Activated T-helper 1 cell treated with anti-CD3 and anti-CD28 coated beads, Interleukin-12 subunit alpha, Interleukin-12 subunit beta, Interleukin-2, Interleukin-4 antibody, amounts not matched to agents 30 ng/mL and 10 ng/mL and 1 ng/mL, durations not matched to agents 14 hours and 24 hours and 36 hours (primary cell): ENCODE measurements at regions of chr2 and their contacts with region 1.

Region 1: GRCh38 chr2:9753276-9753600 is 90.0 kb upstream of the TAF1B start:
- DNase-seq: peak; percentile 45
- H3K4me3 Mint-ChIP-seq: peak overlapping the region; percentile 77
- H3K27ac Mint-ChIP-seq: peak overlapping the region; percentile 96
- H3K4me1 Mint-ChIP-seq: peaks cover 70% of the 10 kb centered on the region
- H3K27me3 Mint-ChIP-seq: peaks cover 34% of the 10 kb centered on the region

Region 2: GRCh38 chr2:9594366-9595054 is 158.7 kb before region 1 on chr2:
- intact Hi-C with region 1: loop called (anchors 1 kb)
- DNase-seq: no peak
- H3K4me3 Mint-ChIP-seq: peak overlapping the region; percentile 28
- H3K27ac Mint-ChIP-seq: peak overlapping the region; percentile 85
- H3K4me1 Mint-ChIP-seq: peaks cover 71% of the 10 kb centered on the region
- H3K27me3 Mint-ChIP-seq: no peaks in the 10 kb centered on the region

Region 3: DNA sequence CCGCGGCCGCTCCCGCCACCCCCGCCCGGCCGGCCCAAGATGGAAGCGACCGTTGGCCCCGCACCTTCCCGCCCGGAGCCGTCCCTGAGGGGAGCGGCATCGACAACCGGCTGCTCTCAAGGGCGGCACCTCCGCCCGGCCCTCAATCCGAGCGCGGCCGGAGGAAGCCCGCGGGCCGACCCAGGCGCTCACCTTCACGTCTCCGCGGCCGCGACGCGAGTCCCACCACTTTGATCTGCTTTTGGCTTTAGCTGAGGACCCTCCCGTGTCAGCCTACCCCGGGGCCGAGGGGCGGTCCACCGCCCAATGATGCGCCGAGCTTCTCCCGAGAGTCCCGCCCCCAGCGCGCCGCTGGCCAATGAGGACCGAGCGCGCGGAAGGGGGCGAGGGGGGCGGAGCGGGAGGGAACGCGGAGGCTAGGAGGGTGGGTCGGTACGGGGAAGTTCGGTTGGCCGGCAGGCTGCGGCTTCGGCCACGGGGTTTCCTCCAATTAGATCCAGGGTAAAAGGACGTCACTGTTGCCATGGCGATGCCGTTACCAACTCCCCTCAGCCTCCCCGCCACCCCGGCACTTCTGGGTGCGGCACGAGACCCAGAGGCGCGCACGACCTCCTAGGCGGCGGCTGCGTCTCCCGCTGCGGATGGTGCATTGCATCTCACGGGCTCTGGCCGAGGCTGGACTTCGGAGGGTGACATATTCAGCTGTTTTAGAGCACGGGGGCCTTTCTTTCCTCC is 122.3 kb before region 1 on chr2 and contains the start of gene YWHAQ:
- intact Hi-C with region 1: loop called (anchors 1 kb)
- DNase-seq: peak; percentile 97
- H3K4me3 Mint-ChIP-seq: peak within 1 kb of the TSS; percentile 97
- H3K27ac Mint-ChIP-seq: peak within 1 kb of the TSS; percentile 93
- H3K4me1 Mint-ChIP-seq: peaks cover 45% of the 10 kb centered on the region
- H3K27me3 Mint-ChIP-seq: peaks cover 9% of the 10 kb centered on the region
- total RNA-seq, gene YWHAQ: 290 and 311 TPM in 2 replicates

Region 4: DNA sequence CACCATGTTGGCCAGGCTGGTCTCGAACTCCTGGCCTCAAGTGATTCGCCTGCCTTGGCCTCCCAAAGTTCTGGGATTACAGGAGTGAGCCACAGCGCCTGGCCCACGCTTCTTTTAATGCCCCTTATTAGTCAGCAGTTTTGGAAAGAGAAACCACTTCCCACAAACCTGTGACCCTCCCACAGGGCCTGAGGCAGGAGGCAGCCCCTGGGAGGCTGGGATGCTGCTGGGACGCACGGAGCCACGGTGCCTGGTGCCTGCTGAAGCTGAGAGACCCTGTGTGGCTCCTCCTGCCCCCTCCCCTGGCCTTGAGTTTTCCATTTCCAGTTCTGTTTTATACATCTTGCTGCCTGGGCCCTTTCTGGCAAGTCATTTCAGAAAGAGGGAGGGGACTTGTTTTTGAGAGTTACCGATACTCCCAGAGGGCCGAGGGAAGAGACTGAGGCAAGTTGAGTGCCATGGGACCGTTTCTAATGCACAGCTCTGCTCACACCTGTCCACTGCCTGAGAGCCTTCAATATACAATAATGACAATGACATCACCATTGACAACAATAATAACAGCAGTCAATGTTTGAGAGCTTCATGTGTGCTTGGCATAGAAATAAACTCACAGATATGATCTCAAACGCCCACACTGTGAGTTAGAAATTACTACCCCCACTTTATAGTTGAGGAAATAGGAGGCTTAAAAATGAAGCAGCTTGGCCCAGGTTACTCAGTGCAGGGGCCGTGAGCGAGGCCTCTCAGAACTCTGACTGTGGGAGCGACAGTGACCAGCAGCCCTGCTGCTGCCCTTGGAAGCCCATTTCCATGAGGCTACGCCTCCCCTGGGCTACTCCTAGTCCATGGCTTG is 44.3 kb before region 1 on chr2:
- intact Hi-C with region 1: loop called (anchors 1 kb)
- DNase-seq: no peak
- H3K4me3 Mint-ChIP-seq: no peak overlapping the region
- H3K27ac Mint-ChIP-seq: peak overlapping the region; percentile 86
- H3K4me1 Mint-ChIP-seq: peaks cover 58% of the 10 kb centered on the region
- H3K27me3 Mint-ChIP-seq: no peaks in the 10 kb centered on the region

Region 5: DNA sequence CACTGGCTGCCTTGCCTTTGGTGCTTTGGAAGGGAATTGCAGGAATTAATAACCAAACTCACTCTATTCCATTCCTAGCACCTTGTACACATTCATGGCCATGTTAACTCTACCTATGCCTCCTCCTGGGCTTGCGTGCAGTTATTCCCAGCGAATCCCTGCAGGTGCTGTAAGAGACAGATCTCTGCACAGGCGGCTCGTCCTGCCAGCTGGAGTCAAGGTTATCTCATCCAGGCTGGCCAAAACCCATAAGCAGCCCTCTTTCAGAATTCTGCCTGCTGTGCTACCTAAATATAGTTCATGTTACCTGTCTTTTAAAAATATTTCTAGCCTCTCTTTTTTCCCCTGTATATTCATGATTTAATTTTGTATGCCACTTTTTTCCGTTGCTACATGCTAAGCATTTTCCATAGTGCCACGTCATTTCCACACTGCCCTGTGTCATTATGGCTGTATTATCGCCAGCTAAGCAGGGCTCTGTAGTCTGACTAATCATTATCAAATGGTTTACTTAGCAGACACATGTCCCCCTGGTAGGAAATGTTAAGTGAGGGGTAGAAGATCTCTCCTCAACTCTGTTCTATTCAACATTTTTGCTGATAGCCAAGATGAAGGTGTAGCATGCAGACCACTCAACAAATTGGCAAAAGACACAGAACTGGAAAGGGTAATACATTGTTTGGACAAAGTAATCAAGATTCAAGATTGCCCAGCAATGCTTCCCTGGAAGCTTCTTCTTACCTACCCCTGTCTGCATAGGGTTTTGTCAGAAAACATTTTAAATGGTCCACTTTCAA is 10.3 kb after region 1 on chr2:
- intact Hi-C with region 1: loop called (anchors 1 kb)
- DNase-seq: no peak
- H3K4me3 Mint-ChIP-seq: no peak overlapping the region
- H3K27ac Mint-ChIP-seq: no peak overlapping the region
- H3K4me1 Mint-ChIP-seq: peaks cover 50% of the 10 kb centered on the region
- H3K27me3 Mint-ChIP-seq: peaks cover 9% of the 10 kb centered on the region

Region 6: GRCh38 chr2:9877733-9878125 is 124.5 kb after region 1 on chr2:
- intact Hi-C with region 1: no loop called
- DNase-seq: no peak
- H3K4me3 Mint-ChIP-seq: no peak overlapping the region
- H3K27ac Mint-ChIP-seq: no peak overlapping the region
- H3K4me1 Mint-ChIP-seq: peaks cover 9% of the 10 kb centered on the region
- H3K27me3 Mint-ChIP-seq: no peaks in the 10 kb centered on the region

Region 7: GRCh38 chr2:10802657-10803056 is 1049.4 kb after region 1 on chr2:
- intact Hi-C with region 1: no loop called
- DNase-seq: no peak
- H3K4me3 Mint-ChIP-seq: no peak overlapping the region
- H3K27ac Mint-ChIP-seq: no peak overlapping the region
- H3K4me1 Mint-ChIP-seq: peaks cover 19% of the 10 kb centered on the region
- H3K27me3 Mint-ChIP-seq: no peaks in the 10 kb centered on the region